HCT116 (cell line): ENCODE measurements at regions of chr1 and their contacts with region 1.

Region 1: DNA sequence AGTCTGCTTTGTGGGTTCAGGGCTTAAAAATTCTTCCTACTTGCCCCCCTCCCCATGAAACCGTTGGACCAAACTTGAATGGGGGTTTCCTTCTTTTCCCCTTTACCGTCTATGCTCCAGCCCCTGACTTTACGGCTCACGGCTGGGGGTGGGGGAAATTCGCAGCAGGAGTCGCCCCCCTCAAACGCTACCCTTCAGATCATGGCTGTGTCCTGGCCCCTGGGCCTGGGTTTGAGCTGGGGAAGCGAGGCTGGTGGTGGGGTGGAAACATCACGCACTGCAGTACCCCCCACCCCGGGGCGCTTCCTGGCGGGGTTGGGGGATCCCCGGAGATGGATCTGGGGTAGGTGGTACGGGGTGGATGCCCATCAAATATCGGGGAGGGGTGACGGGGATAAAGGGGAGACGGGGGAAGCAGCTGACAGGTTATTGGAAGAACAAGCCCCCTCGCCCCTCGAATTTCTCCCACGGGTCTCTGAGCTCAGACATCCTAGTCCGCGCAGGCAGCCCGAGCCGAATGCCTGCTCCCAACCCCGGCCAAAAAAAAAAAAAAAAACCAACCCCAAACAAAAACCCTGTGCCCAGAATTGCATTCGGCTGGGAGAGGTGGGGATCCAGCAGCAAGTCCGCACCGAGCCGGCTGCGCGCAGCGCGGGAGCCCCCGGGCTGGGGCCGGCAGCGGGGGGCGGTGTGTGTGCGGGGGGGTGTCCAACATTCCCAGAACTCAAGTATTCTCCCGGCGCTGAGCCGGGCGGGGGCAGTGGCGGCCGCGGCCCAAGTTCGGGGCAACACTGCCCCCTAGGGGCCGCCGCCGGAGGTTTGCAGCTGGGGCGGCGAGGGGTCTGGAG is 59.0 kb upstream of the ACOT11 start:
- DNase-seq: peak; percentile 32
- ATAC-seq: peak; percentile 77
- H3K4me3 ChIP-seq: peak overlapping the region; percentile 60 to 80
- H3K27ac ChIP-seq: peak overlapping the region; percentile 77
- H3K4me1 ChIP-seq: peaks cover 20 to 24% of the 10 kb centered on the region in 2 experiments
- H3K27me3 ChIP-seq: no peaks in the 10 kb centered on the region
- CTCF ChIP-seq: peak; percentile 88 to 98 (median 88)
- POLR2A ChIP-seq: no peak
- RAD21 ChIP-seq: peak; percentile 97

Region 2: GRCh38 chr1:54070171-54070837 is 418.7 kb before region 1 on chr1:
- CTCF ChIA-PET with region 1: no interaction called
- POLR2A ChIA-PET with region 1: no interaction called
- RAD21 ChIA-PET with region 1: no interaction called
- intact Hi-C with region 1: loop called (anchors 1 kb)
- DNase-seq: peak; percentile 43
- ATAC-seq: peak; percentile 95
- H3K4me3 ChIP-seq: no peak overlapping the region
- H3K27ac ChIP-seq: no peak overlapping the region
- H3K4me1 ChIP-seq: peaks cover 0 to 4% of the 10 kb centered on the region in 2 experiments; a peak in 1 of 4 replicates
- H3K27me3 ChIP-seq: no peaks in the 10 kb centered on the region
- CTCF ChIP-seq: peak; percentile 76 to 100 (median 92)
- POLR2A ChIP-seq: no peak
- RAD21 ChIP-seq: peak; percentile 91

Region 3: DNA sequence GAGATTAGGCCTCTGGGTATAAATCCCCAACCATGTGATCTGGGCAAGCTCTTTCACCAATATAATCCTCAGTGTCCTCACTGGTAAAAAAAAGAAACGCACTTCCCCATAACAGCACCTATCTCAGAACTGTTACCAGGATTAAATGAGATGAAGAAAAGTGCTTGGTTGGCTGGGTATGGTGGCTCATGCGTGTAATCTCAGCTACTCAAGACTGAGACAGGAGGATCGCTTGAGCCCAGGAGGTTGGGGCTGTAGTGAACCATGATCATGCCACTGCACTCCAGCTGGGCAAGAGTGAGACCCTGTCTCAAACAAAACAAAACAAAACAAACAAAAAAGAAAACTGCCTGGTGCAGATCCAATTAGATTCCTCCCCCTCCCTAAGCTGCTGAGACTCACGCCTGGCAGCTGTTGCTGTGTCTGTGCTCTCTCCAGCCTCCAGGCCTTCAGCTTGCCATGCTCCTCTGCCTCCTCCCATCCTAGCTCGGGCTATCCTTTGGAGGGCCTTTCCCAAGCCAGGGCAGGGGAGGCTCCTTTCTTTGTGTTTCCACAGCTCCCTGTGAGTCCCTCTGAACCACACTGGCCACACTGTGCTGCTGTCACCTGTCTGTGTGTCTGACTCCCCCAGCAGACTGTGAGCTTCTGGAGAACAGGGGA is 308.2 kb before region 1 on chr1:
- CTCF ChIA-PET with region 1: interaction called, 10 read pairs
- POLR2A ChIA-PET with region 1: no interaction called
- RAD21 ChIA-PET with region 1: interaction called in 1 of 2 experiments, 4 read pairs
- intact Hi-C with region 1: loop called (anchors 1 kb)
- DNase-seq: no peak
- ATAC-seq: no peak
- H3K4me3 ChIP-seq: no peak overlapping the region
- H3K27ac ChIP-seq: no peak overlapping the region
- H3K4me1 ChIP-seq: no peaks in the 10 kb centered on the region
- H3K27me3 ChIP-seq: no peaks in the 10 kb centered on the region
- CTCF ChIP-seq: no peak
- POLR2A ChIP-seq: no peak
- RAD21 ChIP-seq: no peak

Region 4: DNA sequence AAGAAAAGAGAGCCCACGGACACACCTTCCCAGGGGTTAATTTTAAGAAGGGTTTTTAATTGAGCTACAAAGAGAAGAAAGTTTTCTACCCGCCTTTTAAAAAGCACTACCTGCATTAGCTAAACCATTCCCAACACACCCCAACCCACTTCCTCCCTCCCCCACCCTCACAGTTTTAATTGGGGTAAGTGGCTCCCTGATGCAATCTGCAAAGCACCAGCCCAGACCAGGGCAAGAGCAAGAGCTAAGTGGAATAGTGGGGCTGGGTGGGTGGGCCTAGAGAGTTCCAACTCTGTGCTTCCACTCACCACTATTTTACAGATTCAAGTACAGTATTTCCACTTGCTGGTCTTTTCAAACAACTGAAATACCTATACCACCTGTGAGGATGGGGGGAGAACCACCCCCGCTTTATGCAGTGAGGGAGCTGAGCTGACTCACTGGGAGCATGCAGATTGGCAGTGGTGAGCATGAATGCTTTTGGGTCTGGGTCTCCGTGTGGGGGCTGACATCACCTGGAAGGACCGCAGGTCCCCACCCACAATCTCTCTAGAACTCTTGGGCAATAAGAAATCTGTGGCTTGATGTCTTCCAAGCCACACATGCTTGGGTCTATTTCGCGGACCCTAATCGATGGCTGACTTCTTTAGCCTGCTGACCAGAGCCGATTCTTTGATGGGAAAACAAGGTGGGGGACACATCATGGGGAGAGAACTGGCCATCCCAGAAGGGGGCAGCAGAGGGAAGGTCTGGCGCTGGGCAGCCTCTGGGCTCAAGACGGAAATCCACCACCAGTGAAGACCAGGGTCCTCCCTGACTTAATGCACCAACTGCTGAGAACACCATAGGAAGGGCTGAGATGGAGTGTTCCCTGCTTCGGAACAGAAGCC is 178.3 kb before region 1 on chr1:
- CTCF ChIA-PET with region 1: interaction called, 8 read pairs
- POLR2A ChIA-PET with region 1: no interaction called
- RAD21 ChIA-PET with region 1: no interaction called
- intact Hi-C with region 1: loop called (anchors 2 kb)
- DNase-seq: peak; percentile 4
- ATAC-seq: peak; percentile 80
- H3K4me3 ChIP-seq: no peak overlapping the region
- H3K27ac ChIP-seq: no peak overlapping the region
- H3K4me1 ChIP-seq: peaks cover 14 to 16% of the 10 kb centered on the region in 2 experiments
- H3K27me3 ChIP-seq: no peaks in the 10 kb centered on the region
- CTCF ChIP-seq: peak; percentile 50 to 66 (median 66); a peak in 5 of 6 replicates
- POLR2A ChIP-seq: no peak
- RAD21 ChIP-seq: peak; percentile 76

Region 5: GRCh38 chr1:54499360-54500106 is 10.5 kb after region 1 on chr1:
- CTCF ChIA-PET with region 1: interaction called, 26 read pairs
- POLR2A ChIA-PET with region 1: no interaction called
- RAD21 ChIA-PET with region 1: interaction called in 1 of 2 experiments, 3 read pairs
- intact Hi-C with region 1: no loop called
- DNase-seq: no peak
- ATAC-seq: peak; percentile 81
- H3K4me3 ChIP-seq: peak overlapping the region; percentile 45 to 56
- H3K27ac ChIP-seq: peak overlapping the region; percentile 32; the same call in 1 of the 2 replicates
- H3K4me1 ChIP-seq: peaks cover 13 to 19% of the 10 kb centered on the region in 2 experiments
- H3K27me3 ChIP-seq: no peaks in the 10 kb centered on the region
- CTCF ChIP-seq: peak in 2 of 3 experiments; percentile 51 to 55; a peak in 4 of 6 replicates
- POLR2A ChIP-seq: no peak
- RAD21 ChIP-seq: peak; percentile 55